HEK293T (cell line): ENCODE measurements at regions of chr10 and their contacts with region 1.

Region 1: DNA sequence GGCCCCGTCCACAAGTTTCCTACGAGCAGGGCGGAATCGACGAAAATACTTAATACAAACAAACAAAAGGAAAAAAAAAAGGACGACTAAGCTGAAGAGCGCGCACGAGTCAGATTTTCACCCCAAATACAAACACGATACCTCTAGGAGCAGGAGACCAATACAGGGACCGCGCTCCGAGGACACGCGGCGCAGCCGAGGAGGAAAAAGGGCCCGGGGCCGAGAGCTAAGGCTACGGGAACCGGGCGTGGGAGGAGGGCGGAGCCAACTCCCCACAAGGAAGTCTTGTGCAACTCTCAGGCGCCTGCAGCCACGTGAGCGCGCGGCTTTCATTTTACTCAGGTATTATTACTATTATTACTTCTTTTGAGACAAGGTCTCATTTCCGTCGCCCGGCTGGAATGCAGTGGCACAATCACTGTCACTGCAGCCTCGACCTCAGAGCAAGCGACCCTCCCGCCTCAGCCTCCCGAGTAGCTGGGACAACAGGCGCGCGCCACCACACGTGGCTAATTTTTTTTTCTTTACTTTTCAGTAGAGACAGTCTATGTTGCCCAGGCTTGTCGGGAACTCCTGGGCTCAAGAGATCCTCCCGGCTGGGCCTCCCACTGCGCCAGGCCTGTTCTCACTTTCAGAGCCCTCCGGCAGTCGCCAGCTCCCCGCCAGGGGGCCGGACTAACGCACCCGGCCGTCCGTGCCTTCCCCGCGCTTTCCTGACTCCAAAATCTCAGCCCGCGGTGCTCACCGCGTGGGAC is 1.2 kb downstream of the HNRNPF start:
- DNase-seq: peak; percentile 70

Region 2: DNA sequence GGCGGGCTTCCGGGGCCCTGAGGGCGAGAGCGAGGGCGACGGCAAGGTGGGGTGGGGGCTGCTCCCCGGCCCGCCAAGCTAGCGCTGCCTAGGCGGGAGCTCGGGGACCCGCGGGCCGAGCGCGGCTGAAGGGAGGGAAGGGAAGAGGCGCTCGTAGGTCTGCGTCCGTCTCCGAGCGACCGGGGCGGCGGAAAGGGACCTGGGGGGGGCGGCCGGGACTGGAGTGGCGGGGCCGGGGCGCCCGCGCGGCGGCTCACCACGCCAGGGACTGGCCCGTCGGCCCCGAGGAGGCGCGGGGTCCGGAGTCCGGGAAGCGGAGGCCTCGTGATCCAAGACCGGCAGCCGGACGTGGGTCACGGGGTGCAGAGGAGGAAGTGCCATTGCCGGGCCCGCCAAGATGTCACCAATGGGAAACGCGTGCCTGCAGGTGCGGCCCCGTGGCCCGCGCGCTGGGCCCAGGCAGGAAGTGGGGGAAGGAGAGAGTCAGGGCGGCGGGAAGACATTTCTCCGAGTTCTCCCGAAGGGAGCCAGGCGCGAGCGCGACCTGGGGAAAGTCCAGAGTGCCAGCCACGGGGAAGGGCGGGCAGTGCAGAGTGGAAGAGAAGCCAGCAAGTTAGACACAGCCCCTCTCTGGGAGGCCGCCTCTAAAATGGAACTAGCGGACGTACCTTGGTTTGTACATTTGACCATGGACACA is 10.7 kb before region 1 on chr10:
- CTCF ChIA-PET with region 1: no interaction called
- POLR2A ChIA-PET with region 1: interaction called, 21 read pairs
- DNase-seq: peak; percentile 71

Region 3: GRCh38 chr10:43420369-43421200 is 12.8 kb after region 1 on chr10:
- CTCF ChIA-PET with region 1: interaction called, 7 read pairs
- POLR2A ChIA-PET with region 1: interaction called, 37 read pairs
- DNase-seq: peak; percentile 77